ENCODE measurements at regions of chr15 and their contacts with region 1.

Region 1: GRCh38 chr15:84633311-84634227 is 20.5 kb downstream of the WDR73 start:
- DNase-seq: peak; percentile 18 to 77 (median 52)
- ATAC-seq: peak; percentile 57 to 67 (median 62)
- H3K4me3 ChIP-seq: peak overlapping the region; percentile 58 to 76
- H3K4me3 Mint-ChIP-seq: peak overlapping the region; percentile 88 to 96 (median 95)
- H3K27ac ChIP-seq: peak overlapping the region; percentile 80
- H3K27ac Mint-ChIP-seq: peak overlapping the region; percentile 97
- H3K4me1 ChIP-seq: peaks cover 26 to 40% of the 10 kb centered on the region in 2 experiments
- H3K4me1 Mint-ChIP-seq: peaks cover 48 to 52% (median 49%) of the 10 kb centered on the region in 3 donors
- H3K27me3 ChIP-seq: no peaks in the 10 kb centered on the region
- H3K27me3 Mint-ChIP-seq: no peaks in the 10 kb centered on the region

Region 2: GRCh38 chr15:84645496-84645895 is 11.9 kb after region 1 on chr15:
- CTCF ChIA-PET with region 1: interaction called in 1 of 2 experiments, 10 read pairs
- POLR2A ChIA-PET with region 1: no interaction called
- DNase-seq: no peak
- ATAC-seq: no peak
- H3K4me3 ChIP-seq: no peak overlapping the region
- H3K4me3 Mint-ChIP-seq: no peak overlapping the region
- H3K27ac ChIP-seq: no peak overlapping the region
- H3K27ac Mint-ChIP-seq: no peak overlapping the region
- H3K4me1 ChIP-seq: no peaks in the 10 kb centered on the region
- H3K4me1 Mint-ChIP-seq: peaks cover 3 to 14% (median 11%) of the 10 kb centered on the region in 3 donors
- H3K27me3 ChIP-seq: no peaks in the 10 kb centered on the region
- H3K27me3 Mint-ChIP-seq: no peaks in the 10 kb centered on the region

Measured in T-cell (primary cell).